ENCODE measurements at regions of chr15 and their contacts with region 1.

Region 1: GRCh38 chr15:83769416-83770004 is 115.6 kb downstream of the ADAMTSL3 start:
- DNase-seq: no peak
- ATAC-seq: no peak
- H3K4me3 ChIP-seq: no peak overlapping the region
- H3K27ac ChIP-seq: no peak overlapping the region
- H3K4me1 ChIP-seq: no peaks in the 10 kb centered on the region
- H3K27me3 ChIP-seq: no peaks in the 10 kb centered on the region
- CTCF ChIP-seq: no peak

Region 2: DNA sequence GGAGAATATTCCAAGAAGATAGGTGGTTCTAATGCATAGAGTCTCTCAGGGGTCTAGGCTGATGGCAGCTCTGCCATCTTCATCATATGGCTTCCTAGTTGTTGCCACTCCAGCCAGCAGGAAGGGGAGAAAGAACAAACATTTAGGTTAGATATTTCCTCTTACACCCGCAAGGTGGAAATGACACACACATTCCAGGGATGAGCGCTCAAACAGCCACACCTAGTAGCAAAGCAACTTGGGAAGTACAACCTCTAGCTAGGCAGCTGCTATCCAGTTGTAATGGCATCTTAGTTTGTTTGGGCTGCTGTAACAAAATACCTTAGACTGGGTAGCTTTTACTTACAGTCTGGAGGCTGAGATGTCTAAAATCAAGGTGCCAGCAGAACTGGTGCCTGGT is 167.5 kb before region 1 on chr15:
- intact Hi-C with region 1: no loop called
- DNase-seq: no peak
- ATAC-seq: no peak
- H3K4me3 ChIP-seq: no peak overlapping the region
- H3K27ac ChIP-seq: no peak overlapping the region
- H3K4me1 ChIP-seq: no peaks in the 10 kb centered on the region
- H3K27me3 ChIP-seq: no peaks in the 10 kb centered on the region
- CTCF ChIP-seq: no peak

Region 3: DNA sequence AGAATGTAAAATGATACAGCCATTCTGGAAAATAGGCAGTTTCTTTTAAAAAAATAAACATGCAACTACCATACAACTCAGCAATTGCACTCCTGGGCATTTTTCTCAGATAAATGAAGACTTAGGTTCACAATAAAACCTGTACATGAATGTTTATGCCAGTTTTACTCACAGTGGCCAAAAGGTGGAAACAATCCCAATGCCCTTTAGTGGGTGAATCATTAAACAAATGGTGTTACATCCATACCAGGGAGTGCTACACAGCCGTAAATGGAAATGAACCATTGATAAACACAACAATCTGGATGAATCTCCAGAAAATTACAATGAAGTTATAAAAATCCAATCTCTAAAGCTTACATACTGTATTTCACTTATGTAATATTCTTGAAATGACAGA is 24.7 kb after region 1 on chr15:
- intact Hi-C with region 1: loop called in 1 of 2 experiments (anchors 2 kb)
- DNase-seq: no peak
- ATAC-seq: no peak
- H3K4me3 ChIP-seq: no peak overlapping the region
- H3K27ac ChIP-seq: no peak overlapping the region
- H3K4me1 ChIP-seq: no peaks in the 10 kb centered on the region
- H3K27me3 ChIP-seq: no peaks in the 10 kb centered on the region
- CTCF ChIP-seq: no peak